CD14-positive monocyte (primary cell): ENCODE measurements at regions of chr17 and their contacts with region 1.

Region 1: GRCh38 chr17:60435244-60436167 is 13.2 kb downstream of the CHCT1 start:
- DNase-seq: peak; percentile 61 to 75 (median 73)
- H3K4me3 ChIP-seq: no peak overlapping the region
- H3K4me3 Mint-ChIP-seq: no peak overlapping the region
- H3K27ac ChIP-seq: no peak overlapping the region
- H3K27ac Mint-ChIP-seq: peak overlapping the region in 1 of 7 donors; percentile 47
- H3K4me1 ChIP-seq: peaks cover 7% of the 10 kb centered on the region in 2 donors
- H3K4me1 Mint-ChIP-seq: peaks cover 22% of the 10 kb centered on the region
- H3K27me3 ChIP-seq: no peaks in the 10 kb centered on the region
- H3K27me3 Mint-ChIP-seq: peaks cover 0 to 4% (median 2%) of the 10 kb centered on the region in 3 donors
- CTCF ChIP-seq: peak; percentile 95

Region 2: DNA sequence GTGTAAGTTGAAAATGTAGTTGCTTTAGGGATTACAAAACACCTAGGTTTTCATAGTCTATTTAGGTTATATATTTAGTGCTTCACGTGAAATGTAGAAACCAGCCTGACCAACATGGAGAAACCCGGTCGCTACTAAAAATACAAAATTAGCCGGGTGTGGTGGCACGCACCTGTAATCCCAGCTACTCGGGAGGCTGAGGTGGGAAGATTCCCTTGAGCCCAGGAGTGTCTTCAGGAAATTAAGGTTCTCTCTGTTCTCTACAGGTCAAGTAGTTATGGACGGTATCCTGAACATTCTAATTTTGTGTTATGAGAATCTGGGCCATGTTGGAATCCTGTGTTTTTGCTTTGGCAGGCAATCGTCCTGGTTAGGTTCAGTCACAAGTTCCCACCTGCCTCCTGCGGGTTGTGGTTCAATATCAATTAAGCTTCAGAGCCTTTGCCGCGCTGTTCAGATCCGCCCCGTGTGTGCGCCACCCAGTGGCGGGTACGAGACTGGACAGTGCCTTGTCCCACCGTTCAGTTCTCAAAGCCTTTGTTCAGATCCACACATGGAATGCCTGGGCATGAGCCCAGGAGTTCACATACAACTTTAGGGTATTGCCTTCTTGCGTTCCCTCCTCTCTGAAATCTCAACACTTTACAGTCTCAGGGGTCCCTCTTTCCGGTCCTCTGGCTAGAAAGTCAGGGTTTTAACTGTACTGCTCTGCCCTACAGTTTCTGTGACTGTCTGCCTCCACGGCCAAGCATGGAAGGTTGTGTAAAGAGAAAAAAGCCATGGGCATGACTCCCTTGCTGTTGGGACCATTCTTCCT is 398.5 kb before region 1 on chr17:
- intact Hi-C with region 1: loop called in 1 of 2 experiments (anchors 5 kb)
- DNase-seq: peak; percentile 46 to 58 (median 53)
- H3K4me3 ChIP-seq: no peak overlapping the region
- H3K4me3 Mint-ChIP-seq: peak overlapping the region in 1 of 2 donors; percentile 74
- H3K27ac ChIP-seq: no peak overlapping the region
- H3K27ac Mint-ChIP-seq: no peak overlapping the region
- H3K4me1 ChIP-seq: peaks cover 4 to 5% of the 10 kb centered on the region in 2 donors
- H3K4me1 Mint-ChIP-seq: peaks cover 4% of the 10 kb centered on the region
- H3K27me3 ChIP-seq: peaks cover 2 to 16% of the 10 kb centered on the region in 2 donors
- H3K27me3 Mint-ChIP-seq: peaks cover 11 to 21% (median 11%) of the 10 kb centered on the region in 3 donors
- CTCF ChIP-seq: peak; percentile 97

Region 3: DNA sequence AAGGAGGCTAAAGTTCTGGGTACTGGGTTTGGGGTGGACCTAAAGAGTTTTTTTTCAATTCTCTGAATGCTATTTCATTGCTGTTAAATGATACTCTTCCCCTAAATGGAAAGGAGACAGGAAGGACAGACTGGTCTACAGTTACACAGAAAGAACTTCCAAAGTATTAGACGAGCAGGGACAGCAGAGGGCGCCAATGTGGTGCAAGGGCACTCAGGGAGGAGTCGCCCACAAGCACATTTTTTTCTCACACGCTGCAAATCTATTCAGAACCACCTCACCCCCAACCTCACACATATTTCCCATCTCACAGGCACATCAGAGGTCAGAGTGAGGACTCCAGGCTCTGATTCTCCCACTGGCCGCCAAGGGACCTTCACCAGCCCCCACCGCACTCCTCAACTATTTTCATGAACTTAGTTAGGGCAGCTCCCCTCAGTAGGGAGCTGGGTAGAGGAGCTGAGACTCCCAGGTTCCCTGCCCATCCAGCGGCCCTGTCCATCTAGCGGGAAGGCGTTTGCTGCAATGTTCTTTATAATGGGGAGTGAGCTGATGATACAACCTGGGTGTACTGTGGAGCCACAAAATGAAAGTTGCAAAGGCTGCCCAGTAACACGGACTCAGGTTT is 292.5 kb before region 1 on chr17:
- intact Hi-C with region 1: loop called in 1 of 2 experiments (anchors 10 kb)
- DNase-seq: peak; percentile 44 to 51 (median 50)
- H3K4me3 ChIP-seq: no peak overlapping the region
- H3K4me3 Mint-ChIP-seq: peak overlapping the region in 1 of 2 donors; percentile 65
- H3K27ac ChIP-seq: no peak overlapping the region
- H3K27ac Mint-ChIP-seq: no peak overlapping the region
- H3K4me1 ChIP-seq: peaks cover 26 to 38% of the 10 kb centered on the region in 2 donors
- H3K4me1 Mint-ChIP-seq: peaks cover 42% of the 10 kb centered on the region
- H3K27me3 ChIP-seq: peaks cover 45 to 87% of the 10 kb centered on the region in 2 donors
- H3K27me3 Mint-ChIP-seq: peaks cover 81 to 97% (median 92%) of the 10 kb centered on the region in 3 donors
- CTCF ChIP-seq: peak; percentile 74

Region 4: DNA sequence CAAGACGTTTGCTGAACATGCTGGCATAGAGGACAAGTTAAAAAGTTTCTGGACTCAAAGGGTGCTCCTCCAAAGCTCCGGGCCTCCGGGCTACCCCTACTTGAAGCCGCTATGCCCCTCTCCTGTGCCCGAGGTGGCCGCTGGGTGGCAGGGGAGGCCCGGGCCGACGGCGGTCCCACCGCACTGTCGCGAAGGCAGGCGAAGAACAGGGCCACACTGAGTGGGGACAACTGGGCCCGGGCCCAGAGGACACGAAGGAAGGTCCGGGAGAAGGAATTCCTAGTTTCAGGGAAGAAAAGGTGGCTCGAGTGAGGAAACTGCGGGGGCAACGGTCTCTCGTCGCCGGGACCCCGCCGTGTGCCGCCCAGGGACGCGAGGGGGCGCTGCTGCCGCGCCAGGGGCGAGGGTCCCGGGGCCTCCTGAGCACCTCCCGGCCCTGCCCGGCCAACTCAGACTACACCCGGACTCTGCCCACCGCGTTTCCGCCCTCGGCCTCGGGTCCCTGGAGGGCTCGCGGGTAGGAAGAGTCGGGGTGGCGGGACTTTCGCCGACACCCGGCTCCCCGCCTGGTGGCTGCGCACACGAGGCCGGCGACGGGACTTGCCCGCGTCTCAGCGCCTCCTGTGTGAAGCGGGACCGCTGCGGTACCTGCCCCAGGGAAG is 14.1 kb before region 1 on chr17:
- intact Hi-C with region 1: no loop called
- DNase-seq: peak; percentile 62 to 70 (median 66)
- H3K4me3 ChIP-seq: peak overlapping the region; percentile 57 to 81 (median 69)
- H3K4me3 Mint-ChIP-seq: peak overlapping the region; percentile 81 to 95
- H3K27ac ChIP-seq: peak overlapping the region in 1 of 2 donors; percentile 92
- H3K27ac Mint-ChIP-seq: peak overlapping the region in 6 of 7 donors; percentile 76 to 94 (median 91)
- H3K4me1 ChIP-seq: peaks cover 10 to 16% of the 10 kb centered on the region in 2 donors
- H3K4me1 Mint-ChIP-seq: peaks cover 18% of the 10 kb centered on the region
- H3K27me3 ChIP-seq: no peaks in the 10 kb centered on the region
- H3K27me3 Mint-ChIP-seq: peaks cover 0 to 3% (median 0%) of the 10 kb centered on the region in 3 donors
- CTCF ChIP-seq: peak; percentile 100